Mammary epithelial cell (primary cell): ENCODE measurements at regions of chr9 and their contacts with region 1.

Region 1: DNA sequence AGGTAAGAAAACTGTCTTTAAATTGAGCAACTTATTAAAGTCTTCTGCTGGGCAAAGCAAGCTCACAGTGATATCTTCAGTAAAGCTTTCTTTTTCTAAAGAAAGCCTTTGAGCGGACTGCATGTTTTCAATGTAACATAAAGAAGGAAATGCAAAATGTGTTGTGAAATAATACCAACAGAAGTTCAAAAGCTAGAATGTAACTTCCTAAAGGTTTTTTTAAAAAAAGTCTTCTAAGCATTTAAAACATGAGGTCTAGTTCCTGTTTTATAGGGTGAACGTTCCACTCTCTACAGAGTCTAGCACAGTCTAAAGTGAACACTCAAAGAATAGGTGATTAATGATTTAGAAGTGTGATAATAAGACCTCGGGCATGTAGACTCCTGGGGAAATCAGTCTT is 62.9 kb downstream of the DENND1A start:
- DNase-seq: no peak
- H3K4me3 ChIP-seq: no peak overlapping the region
- H3K27ac ChIP-seq: no peak overlapping the region
- H3K4me1 ChIP-seq: no peaks in the 10 kb centered on the region
- H3K27me3 ChIP-seq: no peaks in the 10 kb centered on the region
- CTCF ChIP-seq: no peak

Region 2: DNA sequence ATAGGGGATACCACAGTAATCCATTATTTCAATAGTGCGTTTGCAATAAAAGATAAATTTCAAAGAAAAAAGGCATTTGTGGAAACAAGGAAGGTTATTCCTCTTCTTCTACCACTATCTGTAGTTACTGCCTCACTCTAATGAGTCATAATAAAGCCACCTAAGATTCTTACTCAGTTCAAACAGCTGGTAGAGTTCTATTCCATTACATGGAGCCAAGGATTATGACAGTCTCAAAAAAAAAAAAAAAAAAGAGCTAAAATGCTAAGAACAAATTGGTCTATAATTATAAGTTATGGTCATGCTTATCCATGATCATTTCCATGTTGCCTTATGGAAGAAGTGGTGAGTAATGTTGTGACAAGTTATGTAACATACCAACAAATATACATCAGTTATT is 16.6 kb after region 1 on chr9:
- CTCF ChIA-PET with region 1: no interaction called
- dilution Hi-C with region 1: no loop called
- in situ Hi-C with region 1: no loop called
- intact Hi-C with region 1: no loop called
- DNase-seq: no peak
- H3K4me3 ChIP-seq: no peak overlapping the region
- H3K27ac ChIP-seq: no peak overlapping the region
- H3K4me1 ChIP-seq: no peaks in the 10 kb centered on the region
- H3K27me3 ChIP-seq: no peaks in the 10 kb centered on the region
- CTCF ChIP-seq: no peak

Region 3: DNA sequence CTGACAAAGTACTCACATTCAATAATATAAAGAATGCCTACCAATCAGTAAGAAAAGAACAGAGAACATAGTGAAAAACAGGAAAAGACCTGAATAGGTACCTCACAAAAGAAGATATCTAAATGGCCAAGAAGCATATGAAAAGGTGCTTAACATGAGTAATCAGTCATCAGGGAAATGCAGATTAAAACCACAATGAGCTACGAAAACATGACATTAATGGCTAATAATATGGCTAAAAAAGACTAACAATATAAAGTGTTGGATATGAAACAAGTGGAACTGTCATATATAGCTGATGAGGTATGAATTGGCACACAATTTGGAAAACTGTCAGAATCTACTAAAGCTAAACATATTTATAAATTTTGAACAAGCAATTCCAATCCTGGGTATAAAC is 44.0 kb after region 1 on chr9:
- CTCF ChIA-PET with region 1: no interaction called
- dilution Hi-C with region 1: no loop called
- in situ Hi-C with region 1: no loop called
- intact Hi-C with region 1: no loop called
- DNase-seq: no peak
- H3K4me3 ChIP-seq: no peak overlapping the region
- H3K27ac ChIP-seq: no peak overlapping the region
- H3K4me1 ChIP-seq: no peaks in the 10 kb centered on the region
- H3K27me3 ChIP-seq: no peaks in the 10 kb centered on the region
- CTCF ChIP-seq: no peak

Region 4: DNA sequence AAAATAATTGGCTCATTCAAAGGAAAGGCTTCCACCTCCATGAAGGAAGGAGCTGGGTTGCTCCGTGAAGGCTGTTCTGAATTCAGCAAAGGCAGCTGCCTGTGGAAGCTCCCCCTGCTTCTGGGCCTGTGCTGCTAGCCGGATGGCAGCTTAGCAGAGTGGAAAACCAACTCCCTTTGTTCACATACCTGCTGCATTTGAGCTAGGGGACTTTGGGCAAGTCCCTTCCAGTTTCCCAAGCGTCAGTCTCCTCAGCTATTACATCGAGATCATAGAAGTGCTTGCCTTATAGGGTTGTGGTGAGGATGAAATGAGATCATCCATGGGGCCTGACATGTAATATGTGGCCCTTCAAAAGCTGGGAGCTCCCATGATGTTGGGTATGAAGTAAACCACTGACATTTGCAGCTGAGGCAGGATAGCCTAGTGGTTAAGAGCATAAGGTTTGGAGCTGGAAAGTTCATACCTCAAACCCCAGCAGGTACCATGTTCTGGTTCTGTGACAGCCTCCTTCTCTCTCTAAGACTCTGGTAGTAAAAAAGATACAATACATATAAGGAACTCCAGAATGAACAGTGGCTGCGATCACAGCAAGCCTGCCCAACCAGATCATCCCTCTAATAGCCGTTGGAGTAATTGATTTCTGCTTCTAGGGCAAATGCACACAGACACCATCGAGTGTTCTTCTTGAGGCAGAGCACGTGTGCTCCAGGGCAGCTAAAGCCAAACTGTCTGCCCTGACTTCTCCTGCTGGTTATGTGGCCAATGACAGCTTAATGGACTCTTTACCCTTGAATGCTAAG is 73.9 kb after region 1 on chr9:
- CTCF ChIA-PET with region 1: interaction called, 11 read pairs
- dilution Hi-C with region 1: no loop called
- in situ Hi-C with region 1: no loop called
- intact Hi-C with region 1: no loop called
- DNase-seq: no peak
- H3K4me3 ChIP-seq: no peak overlapping the region
- H3K27ac ChIP-seq: no peak overlapping the region
- H3K4me1 ChIP-seq: no peaks in the 10 kb centered on the region
- H3K27me3 ChIP-seq: peaks cover under 1% of the 10 kb centered on the region
- CTCF ChIP-seq: no peak